Heart right ventricle (tissue), 16 donors: ENCODE measurements at regions of chr4 and their contacts with region 1.

Region 1: GRCh38 chr4:60522265-60522664 is 677.9 kb upstream of the ADGRL3 start:
- DNase-seq: no peak
- ATAC-seq: no peak
- H3K4me3 ChIP-seq: no peak overlapping the region
- H3K27ac ChIP-seq: no peak overlapping the region
- H3K4me1 ChIP-seq: no peaks in the 10 kb centered on the region
- H3K27me3 ChIP-seq: no peaks in the 10 kb centered on the region
- CTCF ChIP-seq: no peak

Region 2: DNA sequence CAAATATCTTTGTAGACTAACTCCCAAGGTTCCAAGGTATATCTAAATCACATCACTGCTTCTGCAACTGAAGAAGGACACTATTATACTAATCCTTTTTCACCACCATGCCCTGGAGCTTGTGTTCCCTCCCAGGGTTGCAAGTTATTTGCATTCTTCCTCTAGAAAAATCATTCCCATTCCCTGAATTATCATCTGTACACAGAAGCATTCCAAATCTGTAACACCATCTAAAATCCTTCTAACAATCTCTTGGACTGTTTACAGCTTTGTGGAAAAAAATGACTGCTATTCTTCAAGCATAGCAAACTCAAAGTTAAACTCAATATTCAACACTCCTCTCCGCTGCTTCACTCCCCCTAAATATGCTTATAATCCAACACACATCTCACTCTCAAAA is 892.9 kb before region 1 on chr4:
- intact Hi-C with region 1: loop called in 1 of 10 experiments (anchors 5 kb)
- DNase-seq: no peak
- ATAC-seq: no peak
- H3K4me3 ChIP-seq: no peak overlapping the region
- H3K27ac ChIP-seq: no peak overlapping the region
- H3K4me1 ChIP-seq: no peaks in the 10 kb centered on the region
- H3K27me3 ChIP-seq: no peaks in the 10 kb centered on the region
- CTCF ChIP-seq: no peak